Left colon (tissue), 2 donors: ENCODE measurements at regions of chr16 and their contacts with region 1.

Region 1: DNA sequence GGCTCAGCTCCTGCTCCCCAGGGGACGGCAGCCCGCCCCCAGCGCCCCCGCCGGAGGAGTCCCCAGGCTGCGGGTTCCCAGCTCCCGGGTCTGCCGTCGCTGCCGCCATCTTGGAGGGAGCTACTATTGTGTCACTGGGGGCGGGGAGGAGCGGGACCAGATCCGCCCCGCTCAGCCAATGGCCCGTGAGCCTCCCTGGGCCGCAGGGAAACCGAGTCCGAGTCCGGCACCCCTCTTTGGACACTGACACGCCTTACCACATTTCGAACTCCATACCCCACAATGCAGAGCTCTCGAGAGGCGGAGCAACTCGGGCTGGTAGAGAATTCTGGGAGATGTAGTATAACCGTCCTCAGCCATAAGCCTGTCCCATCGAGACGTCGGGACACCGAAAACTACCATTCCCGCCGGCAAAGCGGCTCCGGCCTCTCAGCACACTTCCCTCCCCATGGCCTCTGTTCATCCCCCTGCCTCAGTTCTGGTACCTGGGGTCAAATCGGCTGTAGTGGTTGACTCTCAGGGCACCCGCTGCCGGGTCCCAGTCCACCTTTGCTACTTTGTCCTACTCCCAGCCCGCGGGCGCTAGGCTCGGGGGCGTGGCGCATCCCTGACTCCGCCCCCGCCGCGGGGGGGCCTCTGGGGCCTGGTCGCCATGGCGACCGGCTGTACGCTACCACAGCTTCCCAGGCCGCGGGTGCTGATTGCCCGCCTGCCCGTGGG is at the starts of genes RANBP10 and TSNAXIP1:
- DNase-seq: peak; percentile 95 to 98
- ATAC-seq: peak; percentile 93
- total RNA-seq, gene RANBP10: 16.9 to 20.5 TPM
- total RNA-seq, gene TSNAXIP1: 0.12 to 0.75 TPM

Region 2: DNA sequence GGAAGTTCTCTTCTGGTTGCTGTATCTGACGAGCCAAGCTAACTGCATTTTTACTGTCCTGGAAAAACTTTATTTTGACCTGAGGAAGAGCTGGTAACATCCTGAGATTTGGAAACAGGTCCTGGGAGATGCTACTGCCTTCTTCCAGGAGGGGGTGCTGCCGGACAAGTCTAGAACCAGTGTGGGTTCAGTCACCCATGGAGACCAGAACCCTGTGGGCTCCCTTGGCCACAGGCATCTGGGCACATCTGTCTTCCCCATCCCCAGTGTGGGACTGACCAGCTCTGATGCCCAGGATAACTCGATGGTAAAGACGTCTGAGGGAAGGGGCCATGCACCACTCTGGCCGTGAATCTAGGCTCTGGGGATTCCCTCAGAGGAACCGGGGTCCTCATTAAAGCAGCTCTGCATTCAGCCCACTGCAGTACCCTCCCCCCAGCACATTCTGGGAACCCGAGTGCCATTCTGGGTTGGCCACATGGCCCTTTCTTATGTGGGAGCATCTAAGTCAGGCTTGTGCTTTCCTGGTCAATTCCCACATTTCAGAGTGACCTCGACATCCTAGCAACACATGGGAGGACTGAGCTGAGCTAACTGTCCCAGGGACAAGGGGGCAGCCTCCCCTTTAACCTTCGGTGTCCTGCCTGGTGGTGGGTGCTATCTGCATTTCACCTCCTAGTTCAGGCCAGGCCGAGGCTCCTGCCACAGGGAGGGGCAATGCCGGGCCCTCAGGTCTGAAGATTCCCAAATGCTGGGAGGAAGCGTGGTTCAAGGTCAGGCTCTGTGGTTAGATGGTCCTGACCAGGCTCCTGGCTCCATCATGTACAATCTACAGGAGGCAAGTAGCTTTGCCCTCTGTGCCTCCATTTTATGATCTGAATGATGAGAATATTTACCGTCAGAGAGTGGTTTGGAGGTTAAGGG is 133.6 kb before region 1 on chr16:
- intact Hi-C with region 1: loop called in 1 of 2 experiments (anchors 10 kb)
- DNase-seq: peak; percentile 74 to 79
- ATAC-seq: peak; percentile 57

Region 3: DNA sequence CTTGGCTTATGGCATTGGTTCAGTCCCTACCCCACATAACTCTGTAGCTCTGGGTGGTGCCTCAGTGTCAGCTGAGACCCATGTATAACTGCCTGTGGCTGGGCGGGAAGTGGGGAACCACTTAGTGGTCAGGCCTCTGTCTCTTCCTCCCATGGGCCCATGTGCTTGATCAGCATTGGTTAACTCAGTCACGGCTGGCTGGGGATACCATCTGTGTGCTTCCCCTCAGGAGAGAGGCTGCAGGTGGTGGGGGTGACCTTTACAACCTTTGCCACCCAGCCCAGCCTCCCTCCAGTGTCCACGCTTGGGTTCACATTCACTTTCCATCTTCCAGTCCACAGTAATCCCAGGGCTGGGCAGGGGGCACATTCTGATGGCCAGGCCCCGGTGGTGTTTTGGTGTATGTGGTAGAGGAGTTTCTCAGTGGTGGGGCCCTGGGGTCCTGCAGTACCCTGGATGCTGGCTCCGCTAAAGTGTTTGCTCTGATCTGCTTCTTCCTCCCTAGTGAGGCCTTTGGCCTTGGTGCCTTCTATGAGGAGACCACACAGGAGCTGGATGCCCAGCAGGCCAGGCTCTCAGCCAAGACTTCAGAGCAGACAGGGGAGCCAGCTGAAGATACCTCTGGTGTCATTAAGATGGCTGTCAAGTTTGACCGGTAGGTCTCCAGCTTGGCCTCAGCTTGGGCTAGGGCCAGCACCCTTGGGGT is 268.4 kb after region 1 on chr16:
- intact Hi-C with region 1: no loop called
- DNase-seq: peak; percentile 44 to 61
- ATAC-seq: no peak